Naive thymus-derived CD4-positive, alpha-beta T cell (primary cell): ENCODE measurements at regions of chr1 and their contacts with region 1.

Region 1: DNA sequence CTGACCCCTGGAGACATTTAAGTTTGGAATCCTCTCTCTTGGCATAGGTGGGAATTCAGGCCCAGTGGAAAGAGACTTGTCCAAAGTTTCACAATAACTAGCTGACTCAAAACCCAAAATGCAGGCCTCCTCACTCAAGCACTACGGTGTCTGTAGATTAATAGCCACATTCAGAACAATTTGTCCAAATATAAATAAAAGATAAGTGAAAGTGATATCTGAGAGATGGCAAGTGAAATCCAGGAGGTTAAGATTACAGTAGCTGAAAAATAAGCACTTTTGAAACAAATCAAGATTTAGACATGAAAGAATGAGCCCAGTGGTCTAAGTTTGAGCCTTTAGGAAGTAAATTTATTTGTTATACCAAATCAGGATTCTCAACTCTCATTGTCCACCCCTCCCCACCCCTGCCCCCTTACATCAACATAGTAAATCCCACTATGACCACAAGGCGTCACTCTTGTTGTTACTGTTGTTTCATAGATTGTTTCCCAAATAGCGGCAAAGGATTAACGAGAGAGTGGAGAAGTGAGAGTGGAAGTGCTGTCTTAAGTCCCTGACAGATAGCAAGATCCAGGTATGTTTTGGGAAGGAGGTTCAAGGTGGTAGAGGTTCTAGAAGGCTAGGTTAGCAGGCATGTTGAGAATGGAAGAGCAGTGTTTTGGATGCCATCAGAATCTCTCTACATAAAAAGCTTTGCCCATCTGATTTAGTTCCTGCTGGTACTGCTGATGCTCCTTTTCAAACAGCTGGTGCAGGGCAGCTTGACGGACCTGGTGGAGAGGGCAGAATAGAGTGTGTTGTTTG is 7.1 kb upstream of the TPM3 start:
- DNase-seq: peak in 7 of 9 donors; percentile 44 to 66 (median 61)
- ATAC-seq: peak; percentile 91
- H3K4me3 ChIP-seq: no peak overlapping the region
- H3K4me3 Mint-ChIP-seq: no peak overlapping the region
- H3K27ac ChIP-seq: no peak overlapping the region
- H3K27ac Mint-ChIP-seq: peak overlapping the region in 1 of 9 donors; percentile 69
- H3K4me1 ChIP-seq: no peaks in the 10 kb centered on the region
- H3K4me1 Mint-ChIP-seq: peaks cover 0 to 4% (median 0%) of the 10 kb centered on the region in 7 donors
- H3K27me3 ChIP-seq: no peaks in the 10 kb centered on the region
- H3K27me3 Mint-ChIP-seq: peaks cover 0 to 7% (median 0%) of the 10 kb centered on the region in 5 donors

Region 2: DNA sequence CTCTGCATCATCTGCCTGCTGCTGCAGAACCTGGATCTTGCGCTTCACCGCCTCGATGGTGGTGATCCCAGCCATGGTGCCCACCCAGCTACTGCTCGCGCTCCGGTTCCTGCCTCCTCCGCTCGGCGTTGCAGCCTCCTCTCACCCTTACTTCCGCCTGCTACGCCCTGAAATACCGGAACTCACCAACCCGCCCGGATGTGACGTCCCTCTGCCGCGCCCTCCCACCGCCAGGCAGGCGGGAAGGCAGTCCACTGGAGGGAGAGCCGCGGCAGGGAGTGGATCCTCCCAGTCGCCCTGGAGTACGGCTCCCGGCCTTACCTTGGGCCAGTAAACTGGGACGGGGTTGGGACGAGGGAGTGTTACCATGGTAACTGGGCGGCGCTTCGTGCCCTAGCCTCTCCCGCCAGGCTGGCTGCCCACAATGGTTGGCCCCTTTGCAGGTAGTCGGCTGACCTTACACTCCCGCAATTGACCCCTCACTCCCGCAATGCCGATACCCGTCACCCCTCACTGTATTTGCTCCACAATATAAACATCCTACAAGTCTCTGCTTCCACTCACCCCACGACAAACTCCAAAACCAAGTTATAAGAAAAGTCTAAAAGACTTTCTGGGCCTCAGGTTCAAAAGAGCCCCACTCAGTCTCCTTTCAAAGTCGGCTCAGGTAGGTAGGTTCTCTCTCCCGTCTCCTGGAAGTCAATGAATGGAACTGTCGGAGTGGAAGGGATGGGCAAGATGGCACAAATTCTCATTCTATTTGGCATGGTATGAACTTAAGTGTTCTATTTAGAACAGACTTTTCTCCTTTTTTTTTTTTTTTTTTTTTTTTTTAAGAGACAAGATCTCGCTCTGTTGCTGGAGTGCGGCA is 15.7 kb before region 1 on chr1:
- CTCF ChIA-PET with region 1: interaction called, 3 read pairs
- POLR2A ChIA-PET with region 1: no interaction called
- intact Hi-C with region 1: loop called in 1 of 2 experiments (anchors 1 kb)
- DNase-seq: peak; percentile 84 to 94 (median 94)
- ATAC-seq: peak; percentile 89
- H3K4me3 ChIP-seq: peak overlapping the region; percentile 93
- H3K4me3 Mint-ChIP-seq: peak overlapping the region; percentile 98 to 100 (median 100)
- H3K27ac ChIP-seq: peak overlapping the region; percentile 95
- H3K27ac Mint-ChIP-seq: peak overlapping the region; percentile 98 to 100 (median 99)
- H3K4me1 ChIP-seq: peaks cover 25 to 44% of the 10 kb centered on the region in 2 donors
- H3K4me1 Mint-ChIP-seq: peaks cover 44 to 49% (median 48%) of the 10 kb centered on the region in 7 donors
- H3K27me3 ChIP-seq: no peaks in the 10 kb centered on the region
- H3K27me3 Mint-ChIP-seq: peaks cover 0 to 7% (median 0%) of the 10 kb centered on the region in 5 donors

Region 3: GRCh38 chr1:154335025-154335714 is 136.2 kb after region 1 on chr1:
- CTCF ChIA-PET with region 1: interaction called, 8 read pairs
- POLR2A ChIA-PET with region 1: no interaction called
- intact Hi-C with region 1: loop called in 1 of 2 experiments (anchors 1 kb)
- DNase-seq: peak; percentile 74 to 91 (median 87)
- ATAC-seq: peak; percentile 99
- H3K4me3 ChIP-seq: peak overlapping the region; percentile 23
- H3K4me3 Mint-ChIP-seq: peak overlapping the region; percentile 60 to 85 (median 72)
- H3K27ac ChIP-seq: peak overlapping the region; percentile 68
- H3K27ac Mint-ChIP-seq: peak overlapping the region; percentile 87 to 97 (median 95)
- H3K4me1 ChIP-seq: peaks cover 73% of the 10 kb centered on the region in 2 donors
- H3K4me1 Mint-ChIP-seq: peaks cover 50 to 88% (median 77%) of the 10 kb centered on the region in 7 donors
- H3K27me3 ChIP-seq: no peaks in the 10 kb centered on the region
- H3K27me3 Mint-ChIP-seq: no peaks in the 10 kb centered on the region

Region 4: DNA sequence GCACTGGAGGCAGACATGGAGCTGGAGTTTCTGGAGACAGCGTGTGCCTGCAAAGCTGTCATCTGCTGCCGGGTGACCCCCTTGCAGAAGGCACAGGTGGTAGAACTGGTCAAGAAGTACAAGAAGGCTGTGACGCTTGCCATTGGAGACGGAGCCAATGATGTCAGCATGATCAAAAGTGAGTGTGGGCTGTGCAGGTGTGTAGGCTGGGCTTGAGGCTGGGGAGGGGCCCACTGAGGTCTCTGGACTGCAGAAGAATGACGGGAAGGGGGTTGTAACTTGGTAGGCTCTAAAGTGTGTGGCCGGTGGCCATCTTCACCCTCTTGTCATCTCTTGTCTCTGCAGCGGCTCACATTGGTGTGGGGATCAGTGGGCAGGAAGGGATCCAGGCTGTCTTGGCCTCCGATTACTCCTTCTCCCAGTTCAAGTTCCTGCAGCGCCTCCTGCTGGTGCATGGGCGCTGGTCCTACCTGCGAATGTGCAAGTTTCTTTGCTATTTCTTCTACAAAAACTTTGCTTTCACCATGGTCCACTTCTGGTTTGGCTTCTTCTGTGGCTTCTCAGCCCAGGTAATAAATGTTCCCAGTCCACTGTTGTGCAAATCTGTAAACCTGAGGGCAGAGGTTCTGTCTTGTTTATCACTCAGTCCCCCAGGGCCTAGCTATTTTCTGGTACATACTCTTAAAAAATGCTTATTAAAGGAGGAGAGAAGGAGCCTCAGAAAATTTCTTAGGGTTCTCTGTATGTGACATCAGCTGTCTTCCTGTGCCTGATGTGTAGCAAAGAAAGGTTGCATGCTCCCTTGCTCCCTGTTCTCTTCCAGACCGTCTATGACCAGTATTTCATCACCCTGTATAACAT is 146.2 kb after region 1 on chr1:
- CTCF ChIA-PET with region 1: interaction called, 4 read pairs
- POLR2A ChIA-PET with region 1: interaction called, 3 read pairs
- intact Hi-C with region 1: loop called (anchors 1 to 2 kb)
- DNase-seq: peak; percentile 56 to 79 (median 71)
- ATAC-seq: peak; percentile 55
- H3K4me3 ChIP-seq: peak overlapping the region; percentile 83
- H3K4me3 Mint-ChIP-seq: peak overlapping the region; percentile 79 to 98 (median 92)
- H3K27ac ChIP-seq: peak overlapping the region; percentile 61
- H3K27ac Mint-ChIP-seq: peak overlapping the region; percentile 31 to 100 (median 96)
- H3K4me1 ChIP-seq: peaks cover 60 to 71% of the 10 kb centered on the region in 2 donors
- H3K4me1 Mint-ChIP-seq: peaks cover 64 to 96% (median 73%) of the 10 kb centered on the region in 7 donors
- H3K27me3 ChIP-seq: no peaks in the 10 kb centered on the region
- H3K27me3 Mint-ChIP-seq: no peaks in the 10 kb centered on the region

Region 5: GRCh38 chr1:154607609-154608396 is 408.8 kb after region 1 on chr1 and contains the start of gene ADAR:
- CTCF ChIA-PET with region 1: no interaction called
- POLR2A ChIA-PET with region 1: no interaction called
- intact Hi-C with region 1: no loop called
- DNase-seq: peak; percentile 67 to 95 (median 90)
- ATAC-seq: peak; percentile 92
- H3K4me3 ChIP-seq: peak within 1 kb of the TSS; percentile 78
- H3K4me3 Mint-ChIP-seq: peak within 1 kb of the TSS; percentile 91 to 100 (median 98)
- H3K27ac ChIP-seq: peak within 1 kb of the TSS; percentile 97
- H3K27ac Mint-ChIP-seq: peak within 1 kb of the TSS; percentile 94 to 99 (median 99)
- H3K4me1 ChIP-seq: peaks cover 40 to 42% of the 10 kb centered on the region in 2 donors
- H3K4me1 Mint-ChIP-seq: peaks cover 63 to 90% (median 75%) of the 10 kb centered on the region in 7 donors
- H3K27me3 ChIP-seq: no peaks in the 10 kb centered on the region
- H3K27me3 Mint-ChIP-seq: no peaks in the 10 kb centered on the region
- total RNA-seq, gene ADAR: 206 to 408 (median 237) TPM